ENCODE measurements at regions of chr17 and their contacts with region 1.

Region 1: GRCh38 chr17:57946798-57947358 is 8.3 kb downstream of the CUEDC1 start:
- DNase-seq: no peak
- ATAC-seq: peak; percentile 62
- H3K4me3 ChIP-seq: peak overlapping the region; percentile 26 to 70
- H3K27ac ChIP-seq: peak overlapping the region; percentile 98
- H3K4me1 ChIP-seq: peaks cover 88% of the 10 kb centered on the region
- H3K27me3 ChIP-seq: no peaks in the 10 kb centered on the region
- CTCF ChIP-seq: no peak

Region 2: DNA sequence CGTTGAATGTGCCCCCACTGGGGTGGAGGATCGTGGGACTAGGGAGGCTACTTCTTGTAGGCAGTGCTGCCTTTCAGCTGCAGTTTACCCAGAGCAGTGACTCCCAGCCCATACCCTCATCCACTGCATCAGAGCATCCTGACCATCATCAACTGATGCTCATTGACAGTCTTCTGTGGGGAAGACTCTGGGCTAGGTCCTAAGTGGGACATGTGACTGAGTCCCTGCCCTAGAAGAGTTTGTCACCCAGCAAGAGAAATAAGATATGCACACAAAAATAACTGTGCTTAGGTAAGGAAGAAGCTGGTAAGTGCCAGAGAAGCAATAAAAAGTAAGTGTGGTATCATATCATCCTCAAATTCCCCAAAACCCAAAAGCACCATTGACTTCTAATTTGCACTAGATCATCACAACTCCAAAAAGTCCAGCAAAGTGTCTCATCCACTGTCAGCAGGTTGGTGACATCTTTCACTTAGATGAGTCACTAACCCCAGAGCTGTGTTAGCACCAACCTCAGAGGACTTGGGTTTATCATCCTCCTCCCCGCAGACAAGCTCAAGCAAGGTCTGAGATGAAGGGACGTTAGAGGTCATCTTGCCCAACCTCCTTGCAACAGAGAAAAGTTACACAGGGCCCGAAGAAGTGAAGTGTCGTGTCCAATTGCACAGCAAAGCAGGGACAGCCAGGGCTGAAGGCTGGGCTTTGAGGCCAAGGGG is 300.8 kb before region 1 on chr17:
- CTCF ChIA-PET with region 1: no interaction called
- POLR2A ChIA-PET with region 1: no interaction called
- in situ Hi-C with region 1: no loop called
- intact Hi-C with region 1: no loop called
- DNase-seq: no peak
- ATAC-seq: no peak
- H3K4me3 ChIP-seq: no peak overlapping the region
- H3K27ac ChIP-seq: no peak overlapping the region
- H3K4me1 ChIP-seq: no peaks in the 10 kb centered on the region
- H3K27me3 ChIP-seq: no peaks in the 10 kb centered on the region
- CTCF ChIP-seq: no peak

Region 3: GRCh38 chr17:57727630-57728175 is 219.2 kb before region 1 on chr17:
- CTCF ChIA-PET with region 1: interaction called, 10 read pairs
- POLR2A ChIA-PET with region 1: no interaction called
- in situ Hi-C with region 1: no loop called
- intact Hi-C with region 1: no loop called
- DNase-seq: no peak
- ATAC-seq: peak; percentile 28; the same call in 1 of the 2 replicates
- H3K4me3 ChIP-seq: no peak overlapping the region
- H3K27ac ChIP-seq: no peak overlapping the region
- H3K4me1 ChIP-seq: no peaks in the 10 kb centered on the region
- H3K27me3 ChIP-seq: peaks cover 7% of the 10 kb centered on the region; the same call in 1 of the 2 replicates
- CTCF ChIP-seq: no peak

Region 4: DNA sequence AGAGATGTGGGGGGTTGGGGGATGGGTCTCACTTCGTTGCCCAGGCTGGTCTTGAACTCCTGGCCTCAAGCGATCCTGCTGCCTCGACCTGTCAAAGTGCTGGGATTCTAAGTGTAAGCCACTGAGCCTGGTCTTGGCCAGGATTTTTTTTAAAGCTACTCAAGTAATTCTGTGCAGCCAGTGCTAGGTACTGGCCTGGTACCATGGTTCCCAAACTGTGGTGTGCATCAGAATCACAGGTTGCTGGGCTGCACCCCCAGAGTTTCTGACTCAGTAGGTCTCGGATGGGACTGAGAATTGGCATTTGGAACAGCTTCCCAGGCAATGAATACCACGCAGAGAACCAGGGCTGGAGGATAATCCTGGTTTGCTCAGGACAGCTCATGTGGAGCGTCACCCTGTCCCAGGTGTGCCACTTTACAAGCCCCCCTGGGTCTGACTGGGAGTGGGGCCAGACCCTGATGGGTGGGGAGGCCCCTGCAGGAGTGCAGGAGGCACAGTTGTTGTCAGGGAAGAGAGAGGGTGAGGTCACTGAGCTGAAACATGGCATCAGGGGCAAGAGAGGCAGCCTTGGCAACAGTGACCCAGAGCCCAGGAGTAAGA is 86.4 kb before region 1 on chr17:
- CTCF ChIA-PET with region 1: no interaction called
- POLR2A ChIA-PET with region 1: interaction called, 9 read pairs
- in situ Hi-C with region 1: no loop called
- intact Hi-C with region 1: loop called (anchors 5 kb)
- DNase-seq: no peak
- ATAC-seq: peak; percentile 6
- H3K4me3 ChIP-seq: peak overlapping the region in 1 of 2 experiments; percentile 56; a peak in 1 of 4 replicates
- H3K27ac ChIP-seq: peak overlapping the region; percentile 89
- H3K4me1 ChIP-seq: peaks cover 56% of the 10 kb centered on the region
- H3K27me3 ChIP-seq: no peaks in the 10 kb centered on the region
- CTCF ChIP-seq: no peak

Region 5: DNA sequence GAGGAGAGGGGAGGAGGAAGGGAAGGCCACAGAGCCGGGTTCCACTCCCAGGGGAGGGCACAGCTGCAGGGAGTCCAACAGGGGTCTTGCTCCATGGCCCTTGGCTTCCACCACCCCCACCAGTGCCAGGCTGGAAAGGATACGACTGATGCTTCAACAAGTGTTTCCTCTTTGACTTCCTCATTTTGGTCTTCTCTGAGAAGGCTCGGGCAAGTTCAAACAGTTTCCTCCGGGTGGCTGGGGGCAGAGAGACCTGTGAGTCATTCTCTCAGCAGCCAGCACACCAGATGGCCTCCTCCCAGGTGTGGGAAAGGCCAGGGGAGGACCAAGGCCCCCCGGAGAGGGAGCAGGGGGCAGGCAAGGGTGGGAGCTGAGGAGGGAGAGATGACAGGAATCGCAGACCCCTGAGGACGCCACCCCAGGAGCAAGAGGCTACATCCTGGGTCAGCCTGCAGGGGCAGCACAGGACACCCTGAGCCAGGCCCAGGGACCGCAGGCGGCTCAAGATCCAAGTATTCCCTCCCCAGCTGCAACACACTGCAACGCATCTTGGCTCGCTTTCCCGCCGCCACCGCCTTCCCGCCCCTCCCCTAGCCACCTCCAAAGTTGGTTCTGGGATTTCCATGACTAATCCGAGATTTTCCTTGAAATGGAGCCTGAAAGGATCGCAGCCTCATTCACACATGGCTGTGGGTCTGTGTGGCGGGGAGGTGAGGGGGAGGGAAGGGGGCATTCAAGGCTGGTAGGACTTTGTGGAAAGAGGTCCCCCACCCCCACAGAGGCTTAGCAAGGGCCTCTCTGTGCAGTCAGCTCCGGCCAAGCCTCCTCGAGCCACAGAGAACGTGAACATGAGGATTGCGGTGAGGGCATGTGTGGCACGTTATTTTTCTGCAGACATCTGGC is 78.6 kb before region 1 on chr17:
- CTCF ChIA-PET with region 1: interaction called, 6 read pairs
- POLR2A ChIA-PET with region 1: interaction called, 11 read pairs
- in situ Hi-C with region 1: no loop called
- intact Hi-C with region 1: no loop called
- DNase-seq: no peak
- ATAC-seq: peak; percentile 83
- H3K4me3 ChIP-seq: no peak overlapping the region
- H3K27ac ChIP-seq: peak overlapping the region; percentile 50
- H3K4me1 ChIP-seq: peaks cover 46% of the 10 kb centered on the region
- H3K27me3 ChIP-seq: no peaks in the 10 kb centered on the region
- CTCF ChIP-seq: no peak

Region 6: GRCh38 chr17:57875309-57876115 is 71.4 kb before region 1 on chr17:
- CTCF ChIA-PET with region 1: interaction called, 6 read pairs
- POLR2A ChIA-PET with region 1: interaction called, 11 read pairs
- in situ Hi-C with region 1: no loop called
- intact Hi-C with region 1: loop called (anchors 5 kb)
- DNase-seq: peak; percentile 47
- ATAC-seq: peak; percentile 90
- H3K4me3 ChIP-seq: no peak overlapping the region
- H3K27ac ChIP-seq: peak overlapping the region; percentile 95
- H3K4me1 ChIP-seq: peaks cover 73% of the 10 kb centered on the region
- H3K27me3 ChIP-seq: no peaks in the 10 kb centered on the region
- CTCF ChIP-seq: no peak

Region 7: DNA sequence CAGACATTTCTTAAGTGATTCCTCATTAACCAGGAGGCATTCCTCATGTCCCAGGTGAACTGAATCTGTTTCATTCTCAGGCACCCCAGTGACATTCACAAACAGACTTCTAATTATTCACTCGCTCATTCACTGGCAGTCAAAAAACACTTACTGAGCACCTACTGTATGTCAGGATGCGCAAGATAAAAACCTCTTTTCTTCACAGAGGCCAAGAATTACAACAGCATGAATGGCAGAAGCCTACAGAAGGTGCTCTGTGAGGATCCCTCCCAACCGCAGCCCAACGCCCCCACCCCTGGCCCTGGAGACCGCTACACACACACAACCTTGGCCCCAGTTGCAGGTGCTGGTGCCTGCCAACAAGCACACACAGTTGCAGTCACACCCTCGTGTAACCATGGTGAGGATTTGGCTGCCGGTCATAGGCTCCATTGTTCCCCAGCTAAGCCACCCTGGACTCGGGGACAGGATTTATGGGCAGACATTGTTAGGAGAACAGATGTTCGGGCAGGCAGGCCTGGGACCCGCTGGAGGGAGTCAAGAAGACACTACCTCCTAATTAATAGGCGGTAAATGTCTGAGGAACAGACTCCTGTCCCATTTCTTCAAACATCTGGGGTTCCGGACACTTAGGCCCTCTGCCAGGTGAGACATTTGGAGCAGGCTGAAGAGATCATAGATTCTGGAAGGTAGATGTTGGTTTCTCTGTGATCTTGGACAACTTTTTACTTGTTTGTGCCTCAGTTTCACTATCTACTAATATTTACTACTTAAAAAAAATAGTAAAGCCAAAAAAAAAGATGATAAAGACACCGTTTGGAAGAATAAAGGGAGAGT is 34.8 kb before region 1 on chr17:
- CTCF ChIA-PET with region 1: no interaction called
- POLR2A ChIA-PET with region 1: no interaction called
- in situ Hi-C with region 1: no loop called
- intact Hi-C with region 1: no loop called
- DNase-seq: no peak
- ATAC-seq: peak; percentile 59
- H3K4me3 ChIP-seq: no peak overlapping the region
- H3K27ac ChIP-seq: peak overlapping the region; percentile 10; the same call in 1 of the 2 replicates
- H3K4me1 ChIP-seq: peaks cover 45% of the 10 kb centered on the region
- H3K27me3 ChIP-seq: no peaks in the 10 kb centered on the region
- CTCF ChIP-seq: no peak

Region 8: GRCh38 chr17:58052945-58053846 is 106.3 kb after region 1 on chr17:
- CTCF ChIA-PET with region 1: no interaction called
- POLR2A ChIA-PET with region 1: no interaction called
- in situ Hi-C with region 1: no loop called
- intact Hi-C with region 1: no loop called
- DNase-seq: no peak
- ATAC-seq: no peak; the same call in 1 of the 2 replicates
- H3K4me3 ChIP-seq: no peak overlapping the region
- H3K27ac ChIP-seq: no peak overlapping the region
- H3K4me1 ChIP-seq: no peaks in the 10 kb centered on the region
- H3K27me3 ChIP-seq: peaks cover 2% of the 10 kb centered on the region; the same call in 1 of the 2 replicates
- CTCF ChIP-seq: no peak

Region 9: DNA sequence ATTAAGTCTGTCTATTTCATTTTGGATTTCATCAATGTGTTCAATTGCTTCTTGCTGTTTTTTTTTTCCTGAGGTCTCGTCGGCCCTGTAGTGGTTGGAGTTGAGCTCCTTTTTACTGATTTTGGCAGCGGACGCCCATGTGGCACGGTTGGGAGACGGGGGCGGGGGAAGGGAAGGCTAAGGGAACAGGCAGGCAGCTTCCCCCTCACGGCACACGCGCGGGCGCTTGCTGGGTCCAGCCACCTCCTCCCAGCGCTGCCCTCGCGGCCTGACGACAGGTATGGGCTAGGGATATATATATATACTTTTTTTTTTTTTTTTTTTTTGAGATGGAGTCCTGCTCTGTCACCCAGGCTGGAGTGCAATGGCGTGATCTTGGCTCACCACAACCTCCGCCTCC is 529.9 kb after region 1 on chr17:
- CTCF ChIA-PET with region 1: no interaction called
- POLR2A ChIA-PET with region 1: no interaction called
- in situ Hi-C with region 1: no loop called
- intact Hi-C with region 1: no loop called
- DNase-seq: no peak
- ATAC-seq: no peak
- H3K4me3 ChIP-seq: no peak overlapping the region
- H3K27ac ChIP-seq: no peak overlapping the region
- H3K4me1 ChIP-seq: no peaks in the 10 kb centered on the region
- H3K27me3 ChIP-seq: no peaks in the 10 kb centered on the region
- CTCF ChIP-seq: no peak